HEK293 (cell line): ENCODE measurements at regions of chr17 and their contacts with region 1.

Region 1: DNA sequence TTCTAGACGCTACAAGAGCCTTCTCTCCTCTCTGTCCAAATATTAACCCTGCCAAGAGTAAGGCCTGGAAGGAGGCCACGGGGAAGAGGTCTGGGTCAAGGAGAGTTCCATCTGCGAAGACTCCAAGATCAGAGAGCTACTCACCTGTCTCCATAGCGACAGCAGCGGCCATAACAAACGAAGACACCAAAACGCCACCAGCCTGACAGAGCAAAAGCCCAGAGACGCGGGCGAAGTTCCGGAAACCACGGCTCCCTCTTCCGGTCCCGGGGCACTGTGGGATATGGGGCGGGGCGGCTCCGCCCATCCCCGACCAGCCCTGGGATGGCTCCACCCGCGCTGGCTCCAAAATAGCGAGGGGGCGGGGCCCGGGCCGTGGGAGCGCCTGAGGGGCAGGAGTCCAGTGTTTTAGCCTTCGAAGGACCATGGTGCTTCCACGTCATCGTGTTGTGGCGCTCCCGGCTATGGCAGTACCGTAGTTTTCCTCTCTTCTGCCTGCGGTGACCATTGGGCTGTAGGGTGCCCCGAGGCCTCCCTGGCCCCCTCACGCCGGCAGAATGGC is at the starts of genes C17orf100 and MED31:
- H3K4me3 ChIP-seq: peak within 1 kb of the TSS; percentile 60
- H3K27ac ChIP-seq: peak within 1 kb of the TSS; percentile 83
- H3K4me1 ChIP-seq: peaks cover 25% of the 10 kb centered on the region
- CTCF ChIP-seq: no peak

Region 2: DNA sequence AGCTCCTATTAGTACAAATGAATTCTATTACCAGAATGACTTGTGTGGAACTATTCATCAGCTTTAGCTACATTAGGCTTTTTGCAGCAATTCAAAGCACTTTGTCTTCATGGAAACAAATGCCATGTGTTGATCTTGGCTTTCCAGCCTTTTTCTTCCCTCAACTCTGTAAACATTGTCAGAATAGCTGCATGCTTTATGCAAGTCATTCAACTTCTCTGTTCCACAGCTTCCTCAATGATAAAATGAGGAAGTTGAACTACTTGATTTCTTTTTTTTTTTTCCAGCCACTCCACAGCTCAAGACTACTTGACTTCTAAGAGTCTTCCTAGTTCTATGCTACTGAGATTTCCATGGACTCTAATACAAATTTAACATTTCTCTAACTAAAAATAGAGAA is 52.1 kb before region 1 on chr17:
- CTCF ChIA-PET with region 1: no interaction called
- POLR2A ChIA-PET with region 1: no interaction called
- H3K4me3 ChIP-seq: no peak overlapping the region
- H3K27ac ChIP-seq: no peak overlapping the region
- H3K4me1 ChIP-seq: no peaks in the 10 kb centered on the region
- CTCF ChIP-seq: no peak

Region 3: GRCh38 chr17:6640536-6641373 is 10.7 kb before region 1 on chr17 and contains the starts of genes KIAA0753 and TXNDC17:
- CTCF ChIA-PET with region 1: interaction called, 3 read pairs
- POLR2A ChIA-PET with region 1: interaction called, 26 read pairs
- H3K4me3 ChIP-seq: peak within 1 kb of the TSS; percentile 94
- H3K27ac ChIP-seq: peak within 1 kb of the TSS; percentile 79
- H3K4me1 ChIP-seq: peaks cover 13% of the 10 kb centered on the region; the same call in 1 of the 2 replicates
- CTCF ChIP-seq: peak; percentile 71

Region 4: GRCh38 chr17:6729531-6729930 is 78.1 kb after region 1 on chr17:
- CTCF ChIA-PET with region 1: no interaction called
- POLR2A ChIA-PET with region 1: no interaction called
- H3K4me3 ChIP-seq: no peak overlapping the region
- H3K27ac ChIP-seq: no peak overlapping the region
- H3K4me1 ChIP-seq: no peaks in the 10 kb centered on the region
- CTCF ChIP-seq: no peak